B cell (primary cell): ENCODE measurements at regions of chr4 and their contacts with region 1.

Region 1: DNA sequence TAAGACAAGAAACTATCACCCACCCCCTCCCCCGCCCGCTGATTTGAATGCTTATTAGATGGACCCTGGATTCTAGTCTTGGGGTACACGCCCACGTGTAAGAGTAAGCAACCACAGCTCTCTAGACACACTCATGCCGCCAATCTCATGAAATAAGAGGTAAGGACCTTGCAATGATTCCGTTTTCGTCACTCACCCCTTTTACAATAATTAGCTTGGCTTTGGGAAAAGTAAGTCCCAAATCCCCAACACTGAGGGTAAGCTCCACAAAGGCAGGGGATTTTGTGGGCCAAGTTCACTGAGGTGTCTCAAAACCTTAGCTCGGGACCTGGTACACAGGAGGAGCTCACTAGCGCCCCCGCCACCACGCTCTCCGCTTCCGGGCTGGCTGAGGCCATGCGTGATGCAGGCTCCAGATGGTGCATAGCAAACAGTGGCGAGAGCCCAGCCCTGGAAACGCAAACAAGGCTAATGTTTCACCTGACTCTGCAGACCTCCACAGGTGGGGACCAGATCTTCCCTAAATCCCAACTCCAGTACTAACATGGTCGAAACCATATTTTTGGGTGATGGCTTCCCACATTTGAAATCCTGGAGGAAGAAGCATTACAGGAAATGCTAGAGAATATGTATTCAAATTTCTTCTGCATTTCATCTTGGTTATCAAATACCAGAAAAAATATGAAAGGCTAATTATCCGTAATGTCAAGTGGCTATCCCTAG is 4.1 kb downstream of the PLAC8 start:
- DNase-seq: peak; percentile 94
- ATAC-seq: peak; percentile 75
- H3K4me3 ChIP-seq: peak overlapping the region; percentile 64 to 100 (median 75)
- H3K4me3 Mint-ChIP-seq: peak overlapping the region; percentile 97
- H3K27ac ChIP-seq: peak overlapping the region; percentile 91
- H3K27ac Mint-ChIP-seq: peak overlapping the region; percentile 99
- H3K4me1 ChIP-seq: peaks cover 44 to 48% of the 10 kb centered on the region in 2 donors
- H3K4me1 Mint-ChIP-seq: peaks cover 60% of the 10 kb centered on the region
- H3K27me3 ChIP-seq: no peaks in the 10 kb centered on the region
- H3K27me3 Mint-ChIP-seq: no peaks in the 10 kb centered on the region
- CTCF ChIP-seq: peak; percentile 75

Region 2: GRCh38 chr4:82578935-82579334 is 531.4 kb before region 1 on chr4:
- CTCF ChIA-PET with region 1: no interaction called
- POLR2A ChIA-PET with region 1: no interaction called
- intact Hi-C with region 1: no loop called
- DNase-seq: no peak
- ATAC-seq: no peak
- H3K4me3 ChIP-seq: no peak overlapping the region
- H3K4me3 Mint-ChIP-seq: no peak overlapping the region
- H3K27ac ChIP-seq: no peak overlapping the region
- H3K27ac Mint-ChIP-seq: no peak overlapping the region
- H3K4me1 ChIP-seq: no peaks in the 10 kb centered on the region
- H3K4me1 Mint-ChIP-seq: no peaks in the 10 kb centered on the region
- H3K27me3 ChIP-seq: peaks cover 0 to 3% (median 0%) of the 10 kb centered on the region in 4 experiments
- H3K27me3 Mint-ChIP-seq: peaks cover 7% of the 10 kb centered on the region
- CTCF ChIP-seq: no peak

Region 3: GRCh38 chr4:82900331-82901128 is 209.9 kb before region 1 on chr4 and contains the start of gene THAP9:
- CTCF ChIA-PET with region 1: no interaction called
- POLR2A ChIA-PET with region 1: interaction called, 3 read pairs
- intact Hi-C with region 1: loop called (anchors 10 kb)
- DNase-seq: peak; percentile 99
- ATAC-seq: peak; percentile 90
- H3K4me3 ChIP-seq: peak within 1 kb of the TSS; percentile 73 to 92 (median 90)
- H3K4me3 Mint-ChIP-seq: no peak within 1 kb of the TSS
- H3K27ac ChIP-seq: peak within 1 kb of the TSS; percentile 97 to 98
- H3K27ac Mint-ChIP-seq: no peak within 1 kb of the TSS
- H3K4me1 ChIP-seq: peaks cover 22 to 27% of the 10 kb centered on the region in 2 donors
- H3K4me1 Mint-ChIP-seq: peaks cover 11% of the 10 kb centered on the region
- H3K27me3 ChIP-seq: no peaks in the 10 kb centered on the region
- H3K27me3 Mint-ChIP-seq: no peaks in the 10 kb centered on the region
- CTCF ChIP-seq: no peak
- total RNA-seq, gene THAP9: 6.8 and 7.8 TPM in 2 replicates

Region 4: DNA sequence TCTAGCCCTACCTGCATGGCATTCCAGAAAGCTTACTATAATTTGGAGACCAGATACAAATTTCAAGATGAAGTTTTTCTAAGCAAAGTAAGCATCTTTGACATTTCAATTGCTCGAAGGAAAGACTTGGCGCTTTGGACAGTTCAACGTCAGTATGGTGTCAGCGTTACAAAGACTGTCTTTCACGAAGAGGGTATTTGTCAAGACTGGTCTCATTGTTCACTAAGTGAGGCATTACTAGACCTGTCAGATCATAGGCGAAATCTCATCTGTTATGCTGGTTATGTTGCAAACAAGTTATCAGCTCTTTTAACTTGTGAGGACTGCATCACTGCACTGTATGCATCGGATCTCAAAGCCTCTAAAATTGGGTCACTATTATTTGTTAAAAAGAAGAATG is 192.3 kb before region 1 on chr4:
- CTCF ChIA-PET with region 1: no interaction called
- POLR2A ChIA-PET with region 1: no interaction called
- intact Hi-C with region 1: no loop called
- DNase-seq: no peak
- ATAC-seq: no peak
- H3K4me3 ChIP-seq: no peak overlapping the region
- H3K4me3 Mint-ChIP-seq: no peak overlapping the region
- H3K27ac ChIP-seq: no peak overlapping the region
- H3K27ac Mint-ChIP-seq: no peak overlapping the region
- H3K4me1 ChIP-seq: no peaks in the 10 kb centered on the region
- H3K4me1 Mint-ChIP-seq: no peaks in the 10 kb centered on the region
- H3K27me3 ChIP-seq: no peaks in the 10 kb centered on the region
- H3K27me3 Mint-ChIP-seq: no peaks in the 10 kb centered on the region
- CTCF ChIP-seq: no peak

Region 5: DNA sequence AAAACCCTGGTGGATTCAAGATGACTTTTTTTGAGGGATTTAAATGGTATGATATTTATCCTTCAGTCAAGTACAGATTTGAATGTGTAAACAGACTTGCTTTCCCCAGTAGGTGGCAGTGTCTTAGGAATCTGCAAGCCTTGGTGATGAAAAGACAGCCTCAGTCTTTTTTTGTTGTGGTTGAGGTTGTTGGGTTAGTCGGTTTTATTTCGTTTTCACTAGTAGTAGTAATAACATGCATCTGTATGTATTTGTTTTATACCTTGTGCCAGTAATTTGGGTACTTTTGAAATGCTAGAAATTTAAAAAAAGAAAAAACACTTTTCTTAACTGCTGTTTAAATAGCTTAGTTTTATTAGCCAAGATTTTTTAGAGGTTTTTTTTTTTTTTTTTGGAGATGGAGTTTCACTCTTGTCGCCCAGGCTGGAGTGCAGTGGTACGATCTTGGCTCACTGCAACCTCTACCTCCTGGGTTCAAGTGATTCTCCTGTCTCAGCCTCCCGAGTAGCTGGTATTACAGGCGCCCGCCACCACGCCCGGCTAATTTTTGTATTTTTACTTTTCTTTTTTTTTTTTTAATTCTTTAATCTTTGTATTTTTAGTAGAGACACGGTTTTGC is 36.2 kb before region 1 on chr4:
- CTCF ChIA-PET with region 1: interaction called, 67 read pairs
- POLR2A ChIA-PET with region 1: interaction called, 8 read pairs
- intact Hi-C with region 1: loop called (anchors 1 kb)
- DNase-seq: peak; percentile 85
- ATAC-seq: peak; percentile 85
- H3K4me3 ChIP-seq: no peak overlapping the region
- H3K4me3 Mint-ChIP-seq: peak overlapping the region; percentile 71
- H3K27ac ChIP-seq: no peak overlapping the region
- H3K27ac Mint-ChIP-seq: peak overlapping the region; percentile 57
- H3K4me1 ChIP-seq: peaks cover 16 to 19% of the 10 kb centered on the region in 2 donors
- H3K4me1 Mint-ChIP-seq: peaks cover 20% of the 10 kb centered on the region
- H3K27me3 ChIP-seq: no peaks in the 10 kb centered on the region
- H3K27me3 Mint-ChIP-seq: no peaks in the 10 kb centered on the region
- CTCF ChIP-seq: peak; percentile 78

Region 6: GRCh38 chr4:83124111-83124780 is 13.9 kb after region 1 on chr4:
- CTCF ChIA-PET with region 1: interaction called, 14 read pairs
- POLR2A ChIA-PET with region 1: interaction called, 7 read pairs
- intact Hi-C with region 1: loop called (anchors 1 kb)
- DNase-seq: peak; percentile 69
- ATAC-seq: peak; percentile 86
- H3K4me3 ChIP-seq: peak overlapping the region in 1 of 5 experiments; percentile 16
- H3K4me3 Mint-ChIP-seq: peak overlapping the region; percentile 75
- H3K27ac ChIP-seq: no peak overlapping the region
- H3K27ac Mint-ChIP-seq: peak overlapping the region; percentile 90
- H3K4me1 ChIP-seq: peaks cover 38 to 47% of the 10 kb centered on the region in 2 donors
- H3K4me1 Mint-ChIP-seq: peaks cover 48% of the 10 kb centered on the region
- H3K27me3 ChIP-seq: no peaks in the 10 kb centered on the region
- H3K27me3 Mint-ChIP-seq: no peaks in the 10 kb centered on the region
- CTCF ChIP-seq: no peak

Region 7: DNA sequence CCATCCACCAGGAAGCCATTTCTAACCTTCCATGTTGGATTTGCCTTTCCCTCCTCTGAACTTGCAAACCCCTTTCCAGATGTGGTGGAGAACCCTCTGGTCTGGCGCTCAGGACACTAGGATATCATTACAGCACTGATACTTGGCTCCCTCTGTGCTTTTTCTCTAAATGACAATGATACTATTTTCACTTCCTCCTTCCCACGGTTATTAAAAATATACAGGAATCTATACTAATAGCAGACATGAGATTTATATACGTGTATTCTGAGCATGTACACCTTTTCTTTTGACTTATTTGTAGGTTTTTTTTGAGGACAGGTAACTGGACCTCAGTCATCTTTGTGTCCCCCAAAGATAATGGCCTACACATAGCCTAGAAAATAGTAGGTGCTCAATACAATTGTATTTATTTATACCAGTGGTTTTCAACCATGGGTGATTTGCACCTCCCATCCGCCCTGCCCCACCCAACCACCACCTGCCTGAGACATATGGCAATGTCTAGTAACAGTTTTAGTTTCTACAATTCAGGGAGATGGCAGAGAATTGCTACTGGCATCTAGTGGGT is 64.5 kb after region 1 on chr4:
- CTCF ChIA-PET with region 1: interaction called, 14 read pairs
- POLR2A ChIA-PET with region 1: interaction called, 12 read pairs
- intact Hi-C with region 1: loop called (anchors 2 kb)
- DNase-seq: peak; percentile 82
- ATAC-seq: peak; percentile 79
- H3K4me3 ChIP-seq: peak overlapping the region; percentile 35 to 73 (median 58)
- H3K4me3 Mint-ChIP-seq: peak overlapping the region; percentile 89
- H3K27ac ChIP-seq: peak overlapping the region; percentile 80 to 87
- H3K27ac Mint-ChIP-seq: peak overlapping the region; percentile 96
- H3K4me1 ChIP-seq: peaks cover 78 to 81% of the 10 kb centered on the region in 2 donors
- H3K4me1 Mint-ChIP-seq: peaks cover 78% of the 10 kb centered on the region
- H3K27me3 ChIP-seq: no peaks in the 10 kb centered on the region
- H3K27me3 Mint-ChIP-seq: no peaks in the 10 kb centered on the region
- CTCF ChIP-seq: no peak

Region 8: DNA sequence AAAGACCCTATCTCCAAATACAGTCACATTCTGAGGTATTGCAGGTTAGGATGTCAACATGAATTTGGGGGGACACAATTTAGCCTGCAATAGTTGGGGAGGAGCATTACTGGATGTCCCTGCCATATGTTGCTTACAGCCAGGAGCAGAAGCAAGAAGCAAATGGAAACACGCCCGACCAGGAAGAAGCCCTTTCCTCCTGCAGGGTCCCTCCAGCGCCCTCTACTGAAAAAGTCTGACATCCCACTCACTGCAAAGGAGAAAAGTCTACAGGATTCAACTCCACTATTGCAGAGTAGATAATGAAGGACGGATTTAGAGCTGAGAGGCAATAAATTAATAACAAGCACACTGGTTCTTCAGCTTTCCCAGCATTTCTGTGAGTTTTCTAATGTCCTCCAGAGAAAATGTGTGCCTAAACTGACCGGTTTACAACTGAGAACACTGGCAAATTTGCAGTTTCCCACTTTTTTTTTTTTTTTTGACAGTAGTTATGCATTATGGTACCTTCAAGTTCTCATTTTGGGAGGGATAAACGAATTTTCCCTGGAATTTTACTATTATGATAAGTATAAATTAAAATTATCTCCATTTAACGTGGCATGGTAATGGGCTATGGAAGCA is 142.5 kb after region 1 on chr4:
- CTCF ChIA-PET with region 1: interaction called, 69 read pairs
- POLR2A ChIA-PET with region 1: interaction called, 13 read pairs
- intact Hi-C with region 1: loop called (anchors 1 kb)
- DNase-seq: peak; percentile 82
- ATAC-seq: peak; percentile 69
- H3K4me3 ChIP-seq: no peak overlapping the region
- H3K4me3 Mint-ChIP-seq: no peak overlapping the region
- H3K27ac ChIP-seq: peak overlapping the region in 1 of 2 donors; percentile 3
- H3K27ac Mint-ChIP-seq: peak overlapping the region; percentile 65
- H3K4me1 ChIP-seq: peaks cover 46 to 49% of the 10 kb centered on the region in 2 donors
- H3K4me1 Mint-ChIP-seq: peaks cover 53% of the 10 kb centered on the region
- H3K27me3 ChIP-seq: no peaks in the 10 kb centered on the region
- H3K27me3 Mint-ChIP-seq: no peaks in the 10 kb centered on the region
- CTCF ChIP-seq: peak; percentile 85